Activated T-helper 1 cell treated with anti-CD3 and anti-CD28 coated beads, Interleukin-12 subunit alpha, Interleukin-12 subunit beta, Interleukin-2, Interleukin-4 antibody, amounts not matched to agents 30 ng/mL and 10 ng/mL and 1 ng/mL, durations not matched to agents 14 hours and 24 hours and 36 hours (primary cell): ENCODE measurements at regions of chr6 and their contacts with region 1.

Region 1: DNA sequence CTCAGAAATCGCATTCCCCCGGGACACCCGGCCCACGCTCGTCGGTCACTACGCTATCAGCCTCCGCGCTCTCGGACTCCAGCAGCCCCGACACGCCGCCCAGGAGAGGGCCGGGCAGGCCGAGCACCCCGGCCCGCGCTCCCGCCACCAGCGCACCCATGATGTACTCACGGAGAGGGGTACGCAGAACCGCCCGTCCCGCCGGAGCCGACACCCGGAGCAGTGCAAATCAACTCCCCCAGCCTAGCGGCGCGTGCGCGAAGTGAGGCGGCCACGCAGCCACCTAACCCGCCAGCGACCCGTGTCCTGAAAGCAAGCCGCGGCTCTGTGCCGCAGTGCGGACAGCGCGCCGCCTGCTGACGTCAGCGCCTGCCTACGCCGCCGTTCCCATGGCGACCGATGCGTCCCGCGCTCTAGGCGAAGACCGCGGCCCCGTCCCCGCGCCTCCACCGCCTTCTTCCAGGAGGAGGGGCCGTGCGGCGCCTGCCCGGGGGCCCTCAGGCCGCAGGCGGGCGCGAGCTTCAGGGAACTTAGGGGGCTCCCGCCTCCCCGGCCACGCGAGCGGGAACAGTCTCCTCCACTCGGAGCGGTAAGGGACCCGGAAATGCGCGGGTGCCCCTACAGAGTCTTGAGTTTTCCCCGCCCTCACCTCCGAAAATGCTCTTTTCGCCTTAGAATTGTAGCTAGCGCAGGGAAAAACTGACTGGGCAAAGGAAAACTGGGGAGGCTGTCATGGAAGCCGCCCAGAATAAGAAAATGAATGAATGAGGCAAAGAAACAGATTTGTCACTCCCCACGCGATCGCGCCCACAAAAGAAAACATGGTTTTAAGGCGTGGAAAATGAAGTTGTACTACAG is at the start of gene AHI1:
- DNase-seq: peak; percentile 85
- H3K4me3 Mint-ChIP-seq: no peak within 1 kb of the TSS
- H3K27ac Mint-ChIP-seq: no peak within 1 kb of the TSS
- H3K4me1 Mint-ChIP-seq: peaks cover 20% of the 10 kb centered on the region
- H3K27me3 Mint-ChIP-seq: no peaks in the 10 kb centered on the region
- total RNA-seq, gene AHI1: 142 and 146 TPM in 2 replicates

Region 2: GRCh38 chr6:135114355-135115145 is 383.1 kb before region 1 on chr6:
- intact Hi-C with region 1: loop called (anchors 5 kb)
- DNase-seq: peak; percentile 53
- H3K4me3 Mint-ChIP-seq: peak overlapping the region; percentile 66
- H3K27ac Mint-ChIP-seq: peak overlapping the region; percentile 97
- H3K4me1 Mint-ChIP-seq: peaks cover 88% of the 10 kb centered on the region
- H3K27me3 Mint-ChIP-seq: no peaks in the 10 kb centered on the region

Region 3: DNA sequence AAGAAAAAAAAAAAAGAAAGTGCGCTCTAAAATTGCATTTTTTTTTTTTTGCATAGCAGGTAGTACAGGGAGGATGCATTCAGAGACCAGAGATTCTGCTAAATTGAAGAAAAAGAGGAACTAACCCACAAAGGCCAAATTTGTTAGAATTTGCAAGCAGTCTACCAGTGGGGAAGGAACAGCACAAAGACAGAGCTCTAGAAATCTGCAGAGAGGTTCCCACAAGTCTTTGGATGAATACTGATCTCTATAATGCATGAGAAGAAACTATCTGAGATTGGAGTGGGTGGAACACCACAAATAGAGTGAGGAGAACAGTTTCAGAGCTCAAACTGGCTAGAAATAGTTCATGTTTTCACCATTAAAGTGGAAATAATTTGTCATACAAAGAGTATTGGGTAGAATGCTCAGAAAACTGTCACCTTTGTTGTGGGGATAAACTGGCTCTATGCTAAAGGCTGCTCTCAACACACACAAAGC is 79.5 kb after region 1 on chr6:
- intact Hi-C with region 1: loop called (anchors 1 kb)
- DNase-seq: no peak
- H3K4me3 Mint-ChIP-seq: peak overlapping the region; percentile 49
- H3K27ac Mint-ChIP-seq: peak overlapping the region; percentile 97
- H3K4me1 Mint-ChIP-seq: peaks cover 48% of the 10 kb centered on the region
- H3K27me3 Mint-ChIP-seq: no peaks in the 10 kb centered on the region

Region 4: DNA sequence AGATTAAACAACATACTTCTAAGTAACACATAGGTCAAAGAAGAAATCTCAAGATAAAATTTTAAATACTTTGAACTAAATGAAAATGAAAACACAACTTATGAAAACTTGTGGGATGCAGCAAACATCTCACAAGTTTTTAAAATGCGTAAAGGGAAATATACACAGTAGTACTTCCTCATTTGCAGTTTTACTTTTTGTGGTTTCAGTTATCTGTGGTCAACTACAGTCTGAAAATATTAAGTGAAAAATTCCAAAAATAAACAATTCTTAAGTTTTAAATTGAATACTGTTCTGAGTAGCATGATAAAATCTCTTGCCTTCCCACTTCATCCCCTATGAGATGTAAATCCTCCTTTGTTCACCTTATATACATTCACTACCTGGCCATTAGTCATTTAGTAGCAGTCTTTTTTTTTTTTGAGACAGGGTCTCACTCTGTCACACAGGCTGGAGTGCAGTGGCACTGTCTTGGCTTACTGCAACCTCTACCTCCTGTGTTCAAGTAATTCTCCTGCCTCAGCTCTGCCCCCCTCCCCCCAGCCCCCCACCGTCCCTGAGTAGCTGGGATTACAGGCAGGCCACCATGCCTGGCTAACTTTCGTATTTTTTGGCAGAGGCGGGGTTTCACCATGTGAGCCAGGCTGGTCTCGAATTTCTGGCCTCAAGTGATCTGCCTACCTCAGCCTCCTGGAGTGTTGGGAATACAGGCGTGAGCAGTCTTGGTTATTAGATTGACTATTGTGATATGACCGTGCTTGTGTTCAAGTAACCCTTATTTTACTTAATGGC is 154.5 kb after region 1 on chr6:
- intact Hi-C with region 1: loop called (anchors 1 kb)
- DNase-seq: no peak
- H3K4me3 Mint-ChIP-seq: peak overlapping the region; percentile 57
- H3K27ac Mint-ChIP-seq: peak overlapping the region; percentile 91
- H3K4me1 Mint-ChIP-seq: peaks cover 44% of the 10 kb centered on the region
- H3K27me3 Mint-ChIP-seq: no peaks in the 10 kb centered on the region

Region 5: DNA sequence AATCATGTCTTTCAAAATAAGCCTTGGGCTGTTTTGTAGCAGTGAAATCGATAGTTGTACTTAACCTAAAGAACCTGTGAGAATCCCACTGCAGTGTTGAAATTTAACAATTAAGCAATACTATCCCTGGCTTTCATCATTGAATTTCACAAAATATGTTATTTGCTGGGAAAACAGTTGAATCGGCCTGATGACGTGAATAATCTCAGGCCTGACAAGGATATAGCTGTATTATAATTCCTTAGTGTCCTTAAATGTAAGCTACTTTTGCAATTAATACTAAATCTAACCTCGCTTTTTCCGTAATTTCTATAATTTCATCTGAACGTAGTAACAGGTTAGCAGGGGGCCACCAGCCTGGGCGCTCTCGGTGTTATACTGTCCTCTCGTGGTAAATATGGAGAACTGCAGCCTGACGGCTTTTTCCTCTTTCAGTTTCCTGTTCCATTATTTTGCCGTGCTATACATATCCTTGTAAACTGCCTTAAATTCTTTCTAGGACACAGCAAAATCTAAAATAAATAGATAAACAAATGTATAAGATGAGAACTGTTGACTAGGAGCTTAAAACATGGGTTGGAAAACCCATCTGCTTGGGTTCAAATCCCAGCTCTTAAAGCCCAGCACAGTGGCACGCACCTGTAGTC is 728.5 kb after region 1 on chr6:
- intact Hi-C with region 1: loop called (anchors 2 kb)
- DNase-seq: peak; percentile 35
- H3K4me3 Mint-ChIP-seq: peak overlapping the region; percentile 0
- H3K27ac Mint-ChIP-seq: peak overlapping the region; percentile 25
- H3K4me1 Mint-ChIP-seq: peaks cover 27% of the 10 kb centered on the region
- H3K27me3 Mint-ChIP-seq: no peaks in the 10 kb centered on the region

Region 6: GRCh38 chr6:136317021-136317694 is 819.5 kb after region 1 on chr6:
- intact Hi-C with region 1: loop called (anchors 2 kb)
- DNase-seq: peak; percentile 41
- H3K4me3 Mint-ChIP-seq: no peak overlapping the region
- H3K27ac Mint-ChIP-seq: no peak overlapping the region
- H3K4me1 Mint-ChIP-seq: no peaks in the 10 kb centered on the region
- H3K27me3 Mint-ChIP-seq: peaks cover 9% of the 10 kb centered on the region